Panc1 (cell line): ENCODE measurements at regions of chr13 and their contacts with region 1.

Region 1: DNA sequence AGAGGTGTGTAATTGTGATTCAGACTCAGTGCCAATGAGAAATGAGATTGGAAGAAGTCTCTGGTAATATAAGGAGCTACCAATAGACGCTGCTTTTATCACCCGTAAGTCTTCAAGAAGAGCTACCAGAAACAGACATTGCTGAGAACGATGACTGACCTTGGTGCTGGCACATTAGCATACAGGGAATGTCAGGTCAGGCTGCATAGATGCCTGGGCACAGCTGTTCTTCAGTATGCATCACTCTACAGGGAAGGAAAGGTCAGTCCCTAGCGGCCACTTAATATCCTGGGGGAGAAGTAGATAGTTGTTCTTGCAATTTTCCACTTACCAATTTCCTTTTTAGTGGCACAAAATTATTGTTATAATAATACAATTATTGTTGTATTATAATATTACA is 380.4 kb downstream of the PCDH9 start:
- DNase-seq: no peak
- ATAC-seq: no peak
- H3K4me3 ChIP-seq: no peak overlapping the region
- H3K27ac ChIP-seq: no peak overlapping the region
- H3K4me1 ChIP-seq: no peaks in the 10 kb centered on the region
- H3K27me3 ChIP-seq: no peaks in the 10 kb centered on the region
- CTCF ChIP-seq: no peak

Region 2: DNA sequence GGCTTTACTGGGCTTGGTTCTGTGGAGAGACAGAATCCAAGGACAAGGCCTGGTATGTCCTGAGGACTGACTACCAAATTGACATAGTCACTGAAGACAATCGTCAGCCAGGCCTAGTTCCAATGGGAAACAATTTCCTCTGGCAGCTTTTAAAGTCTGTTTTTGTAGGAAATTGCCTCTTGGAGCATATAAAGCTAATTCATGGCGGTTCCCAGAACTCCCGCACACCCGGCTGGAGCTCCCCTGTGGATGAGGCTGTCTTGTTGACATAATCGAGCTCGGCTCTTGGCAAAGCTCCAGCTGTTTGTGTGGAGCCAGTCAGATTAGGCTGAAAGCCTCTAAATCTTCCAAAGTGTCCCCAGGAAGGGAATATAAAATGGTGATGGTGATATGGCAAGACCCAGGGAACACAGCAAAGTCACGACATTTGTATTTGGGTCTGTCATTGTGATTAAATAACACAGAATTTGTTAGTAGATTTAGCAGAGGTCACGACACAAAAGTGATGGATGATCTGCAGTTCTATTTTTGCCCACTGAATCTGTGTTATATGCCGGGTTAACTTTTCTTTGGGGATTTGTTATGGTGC is 14.6 kb before region 1 on chr13:
- CTCF ChIA-PET with region 1: no interaction called
- POLR2A ChIA-PET with region 1: interaction called, 10 read pairs
- in situ Hi-C with region 1: no loop called
- intact Hi-C with region 1: no loop called
- DNase-seq: no peak
- ATAC-seq: no peak
- H3K4me3 ChIP-seq: no peak overlapping the region
- H3K27ac ChIP-seq: no peak overlapping the region
- H3K4me1 ChIP-seq: no peaks in the 10 kb centered on the region
- H3K27me3 ChIP-seq: no peaks in the 10 kb centered on the region
- CTCF ChIP-seq: no peak